Esophagus muscularis mucosa (tissue), 4 donors: ENCODE measurements at regions of chr22 and their contacts with region 1.

Region 1: DNA sequence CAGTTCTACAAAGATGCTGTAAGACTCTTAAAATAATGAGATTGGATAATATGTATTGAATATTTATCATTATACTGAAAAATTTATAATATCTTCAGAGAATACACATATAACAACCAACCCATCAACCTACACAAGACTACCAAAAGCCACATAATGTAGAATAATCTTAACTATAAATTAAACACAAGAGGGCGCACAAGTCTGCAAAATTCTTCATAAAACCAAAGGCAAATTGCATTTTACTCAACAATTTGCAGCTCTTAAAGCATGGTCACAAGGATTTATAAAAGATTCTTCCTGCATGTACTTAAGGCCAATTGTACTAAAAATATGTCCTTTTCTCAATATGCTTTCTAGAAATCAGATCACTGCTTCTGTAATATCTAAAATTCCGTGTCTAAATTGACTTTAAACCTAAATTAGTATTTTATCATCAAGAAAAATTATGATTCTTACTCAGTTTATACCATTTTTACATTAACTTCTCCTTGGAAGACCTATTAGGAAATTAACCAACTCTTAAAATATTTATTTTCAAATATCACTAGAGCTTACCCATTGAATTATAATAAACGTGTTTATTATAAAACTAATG is 79.0 kb downstream of the TTC28 start:
- DNase-seq: no peak
- H3K4me3 ChIP-seq: no peak overlapping the region
- H3K27ac ChIP-seq: no peak overlapping the region
- H3K4me1 ChIP-seq: peaks cover 0 to 10% (median 2%) of the 10 kb centered on the region in 4 donors
- H3K27me3 ChIP-seq: no peaks in the 10 kb centered on the region
- CTCF ChIP-seq: peak; percentile 49 to 55 (median 49)
- EP300 ChIP-seq: no peak
- POLR2A ChIP-seq: no peak

Region 2: GRCh38 chr22:28630177-28630574 is 29.5 kb after region 1 on chr22:
- intact Hi-C with region 1: no loop called
- DNase-seq: no peak
- H3K4me3 ChIP-seq: no peak overlapping the region
- H3K27ac ChIP-seq: no peak overlapping the region
- H3K4me1 ChIP-seq: no peaks in the 10 kb centered on the region
- H3K27me3 ChIP-seq: no peaks in the 10 kb centered on the region
- CTCF ChIP-seq: no peak
- EP300 ChIP-seq: no peak
- POLR2A ChIP-seq: no peak

Region 3: GRCh38 chr22:28741758-28742561 is 141.3 kb after region 1 on chr22 and contains the starts of genes CHEK2 and HSCB:
- intact Hi-C with region 1: loop called (anchors 10 kb)
- DNase-seq: peak; percentile 100
- H3K4me3 ChIP-seq: peak within 1 kb of the TSS; percentile 68 to 100 (median 88)
- H3K27ac ChIP-seq: peak within 1 kb of the TSS; percentile 94 to 100 (median 97)
- H3K4me1 ChIP-seq: peaks cover 10 to 20% (median 17%) of the 10 kb centered on the region in 4 donors
- H3K27me3 ChIP-seq: no peaks in the 10 kb centered on the region
- CTCF ChIP-seq: no peak
- EP300 ChIP-seq: no peak
- POLR2A ChIP-seq: peak; percentile 42
- total RNA-seq, gene CHEK2: 2.9 to 5.1 (median 4.8) TPM
- total RNA-seq, gene HSCB: 13.7 to 30.0 (median 15.7) TPM

Region 4: GRCh38 chr22:28829358-28830181 is 228.9 kb after region 1 on chr22:
- intact Hi-C with region 1: loop called (anchors 1 kb)
- DNase-seq: peak; percentile 93
- H3K4me3 ChIP-seq: no peak overlapping the region
- H3K27ac ChIP-seq: peak overlapping the region in 3 of 4 donors; percentile 5 to 55 (median 9)
- H3K4me1 ChIP-seq: peaks cover 9 to 16% (median 13%) of the 10 kb centered on the region in 4 donors
- H3K27me3 ChIP-seq: no peaks in the 10 kb centered on the region
- CTCF ChIP-seq: peak; percentile 97 to 98 (median 98)
- EP300 ChIP-seq: no peak
- POLR2A ChIP-seq: no peak